ENCODE measurements at regions of chr6 and their contacts with region 1.

Region 1: GRCh38 chr6:97059473-97059872 is 134.9 kb downstream of the KLHL32 start:
- DNase-seq: no peak
- ATAC-seq: peak in 1 of 2 donors; percentile 61
- H3K4me3 ChIP-seq: no peak overlapping the region
- H3K27ac ChIP-seq: no peak overlapping the region
- H3K4me1 ChIP-seq: no peaks in the 10 kb centered on the region
- H3K27me3 ChIP-seq: no peaks in the 10 kb centered on the region
- CTCF ChIP-seq: peak; percentile 18 to 54 (median 25)
- POLR2A ChIP-seq: no peak

Region 2: DNA sequence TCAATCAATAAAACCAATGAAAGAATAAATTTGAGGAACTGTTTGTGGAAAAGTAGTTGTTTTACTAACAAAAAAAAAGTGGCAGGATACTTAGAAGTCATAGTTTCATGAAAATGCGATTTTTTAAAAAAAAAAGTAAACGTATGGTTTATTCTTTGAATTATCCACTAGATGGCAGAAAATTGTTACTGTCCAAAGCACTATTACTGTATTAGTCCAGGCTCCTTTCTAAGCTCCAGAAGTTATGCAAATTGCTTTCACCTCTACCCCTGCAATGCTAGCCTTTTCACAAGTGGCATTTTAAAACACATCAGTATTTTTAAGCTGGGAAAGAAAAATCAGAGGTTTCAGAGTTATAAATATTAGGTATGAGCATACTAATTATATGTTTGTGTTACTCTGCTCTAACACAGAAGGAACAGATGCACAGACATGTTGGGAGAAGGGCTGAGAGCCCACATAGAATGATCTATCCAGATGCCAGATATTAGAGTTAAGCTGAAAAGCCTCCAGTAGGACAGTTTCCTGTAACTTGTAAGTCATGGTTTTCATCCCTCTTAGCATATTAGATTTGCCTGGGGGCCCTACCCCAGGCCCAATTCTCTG is 432.6 kb before region 1 on chr6:
- in situ Hi-C with region 1: loop called in 1 of 4 experiments (anchors 25 kb)
- intact Hi-C with region 1: no loop called
- DNase-seq: no peak
- ATAC-seq: no peak
- H3K4me3 ChIP-seq: no peak overlapping the region
- H3K27ac ChIP-seq: no peak overlapping the region
- H3K4me1 ChIP-seq: no peaks in the 10 kb centered on the region
- H3K27me3 ChIP-seq: no peaks in the 10 kb centered on the region
- CTCF ChIP-seq: peak in 1 of 5 experiments; percentile 13
- POLR2A ChIP-seq: no peak

Region 3: DNA sequence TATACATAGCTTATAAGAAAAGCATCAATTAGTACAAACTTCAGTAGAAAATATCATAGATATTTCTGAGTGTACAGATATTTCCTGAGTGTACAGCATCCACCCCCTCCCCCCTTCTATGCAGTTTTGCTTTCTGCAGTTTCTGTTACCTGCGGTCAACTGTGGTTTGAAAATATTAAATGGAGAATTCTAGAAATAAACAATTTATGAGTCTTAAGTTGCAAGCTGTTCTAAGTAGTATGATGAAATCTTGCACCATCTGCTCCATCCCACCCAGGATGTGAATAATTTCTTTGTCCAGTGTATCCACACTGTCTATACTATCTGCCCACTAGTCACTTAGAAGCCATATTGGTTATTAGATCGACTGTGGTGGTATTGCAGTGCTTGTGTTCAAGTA is 206.4 kb before region 1 on chr6:
- in situ Hi-C with region 1: no loop called
- intact Hi-C with region 1: no loop called
- DNase-seq: no peak
- ATAC-seq: no peak
- H3K4me3 ChIP-seq: no peak overlapping the region
- H3K27ac ChIP-seq: no peak overlapping the region
- H3K4me1 ChIP-seq: no peaks in the 10 kb centered on the region
- H3K27me3 ChIP-seq: no peaks in the 10 kb centered on the region
- CTCF ChIP-seq: no peak
- POLR2A ChIP-seq: no peak

Region 4: DNA sequence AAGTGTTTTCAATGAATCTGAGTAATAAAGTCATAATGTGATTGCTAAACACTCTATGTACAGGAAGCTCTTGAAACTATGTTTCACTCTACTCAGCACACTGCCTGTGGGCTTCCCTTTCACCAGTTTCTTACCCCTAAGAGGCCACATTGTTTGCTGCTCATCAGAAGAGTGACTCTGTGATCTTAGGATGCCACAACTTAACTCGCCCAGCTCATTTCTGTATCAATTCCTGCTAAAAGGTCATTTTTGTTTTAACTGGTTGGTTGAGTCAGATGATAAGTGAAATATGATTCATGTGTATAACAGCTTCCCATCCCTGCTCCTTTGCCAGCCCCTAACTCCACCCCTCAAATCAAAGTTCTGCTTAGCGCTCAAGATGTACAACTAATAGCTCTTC is 152.0 kb before region 1 on chr6:
- in situ Hi-C with region 1: loop called in 3 of 4 experiments (anchors 5 to 10 kb)
- intact Hi-C with region 1: no loop called
- DNase-seq: no peak
- ATAC-seq: no peak
- H3K4me3 ChIP-seq: no peak overlapping the region
- H3K27ac ChIP-seq: no peak overlapping the region
- H3K4me1 ChIP-seq: no peaks in the 10 kb centered on the region
- H3K27me3 ChIP-seq: peaks cover 0 to 2% (median 0%) of the 10 kb centered on the region in 3 donors
- CTCF ChIP-seq: no peak
- POLR2A ChIP-seq: no peak

Region 5: GRCh38 chr6:97085772-97086171 is 26.3 kb after region 1 on chr6:
- in situ Hi-C with region 1: no loop called
- intact Hi-C with region 1: no loop called
- DNase-seq: no peak
- ATAC-seq: no peak
- H3K4me3 ChIP-seq: no peak overlapping the region
- H3K27ac ChIP-seq: no peak overlapping the region
- H3K4me1 ChIP-seq: no peaks in the 10 kb centered on the region
- H3K27me3 ChIP-seq: no peaks in the 10 kb centered on the region
- CTCF ChIP-seq: no peak
- POLR2A ChIP-seq: no peak